Ascending aorta (tissue), 2 donors: ENCODE measurements at regions of chr6 and their contacts with region 1.

Region 1: DNA sequence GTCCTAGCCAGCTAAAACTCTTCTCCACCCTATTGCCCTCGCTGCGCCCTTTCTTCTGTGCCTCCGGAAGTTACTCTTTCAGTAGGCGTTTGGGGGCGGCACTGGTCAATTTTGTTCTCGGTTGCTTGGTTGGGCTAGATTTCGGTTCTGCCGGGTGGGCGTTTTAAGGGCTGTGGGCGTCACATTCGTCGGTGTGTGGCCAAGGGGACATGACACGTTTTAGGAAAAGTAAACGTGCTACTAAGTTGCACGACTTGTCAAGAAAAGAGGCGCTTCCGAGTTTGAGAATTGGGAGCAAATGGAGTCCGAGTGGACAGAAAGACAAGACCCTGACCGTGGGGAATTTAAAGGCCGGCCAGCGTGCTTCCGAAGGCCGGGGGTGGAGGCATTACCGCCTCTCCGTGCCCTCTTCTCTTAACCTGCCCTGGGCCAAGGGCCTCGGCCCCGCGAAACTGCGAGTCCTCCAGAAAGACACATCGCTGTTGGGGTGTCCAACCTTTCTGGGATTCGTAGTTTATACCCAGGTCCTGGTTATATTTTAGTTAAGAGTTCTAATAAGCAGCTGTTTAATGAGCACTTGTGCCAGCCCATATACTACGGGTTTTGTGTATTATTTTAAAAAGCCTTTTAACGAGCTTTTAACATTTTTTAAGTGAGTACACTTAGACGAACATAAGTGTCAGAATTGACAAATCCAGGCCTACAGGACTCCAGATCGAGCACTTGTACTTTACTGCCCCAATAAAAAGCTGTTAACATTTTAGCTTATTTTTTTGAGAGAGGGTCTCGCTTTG is 661 bp upstream of the BAG6 start:
- DNase-seq: peak; percentile 56 to 96
- H3K4me3 ChIP-seq: peak overlapping the region; percentile 70 to 86
- H3K27ac ChIP-seq: peak overlapping the region; percentile 93 to 98
- H3K4me1 ChIP-seq: peaks cover 4 to 19% of the 10 kb centered on the region in 2 donors
- H3K27me3 ChIP-seq: no peaks in the 10 kb centered on the region
- CTCF ChIP-seq: peak in 1 of 3 experiments; percentile 26

Region 2: GRCh38 chr6:31619805-31620585 is 33.1 kb before region 1 on chr6:
- intact Hi-C with region 1: loop called (anchors 1 kb)
- DNase-seq: peak; percentile 97 to 99
- H3K4me3 ChIP-seq: peak overlapping the region; percentile 76 to 93
- H3K27ac ChIP-seq: peak overlapping the region; percentile 98 to 99
- H3K4me1 ChIP-seq: peaks cover 8 to 9% of the 10 kb centered on the region in 2 donors
- H3K27me3 ChIP-seq: no peaks in the 10 kb centered on the region
- CTCF ChIP-seq: no peak